HepG2 (cell line): ENCODE measurements at regions of chr17 and their contacts with region 1.

Region 1: GRCh38 chr17:35063514-35064223 is at the start of gene RFFL:
- DNase-seq: peak; percentile 98
- ATAC-seq: peak; percentile 99
- H3K4me3 ChIP-seq: peak within 1 kb of the TSS; percentile 15 to 50 (median 35)
- H3K27ac ChIP-seq: peak within 1 kb of the TSS; percentile 95
- H3K4me1 ChIP-seq: peaks cover 96% of the 10 kb centered on the region
- H3K27me3 ChIP-seq: no peaks in the 10 kb centered on the region
- CTCF ChIP-seq: peak; percentile 80
- EP300 ChIP-seq: peak; percentile 86 to 88; a peak in 3 of 4 replicates
- POLR2A ChIP-seq: peak; percentile 60 to 87
- RAD21 ChIP-seq: peak; percentile 59; the same call in 1 of the 2 replicates
- total RNA-seq, gene RFFL: 24.3 and 36.7 TPM in 2 replicates

Region 2: GRCh38 chr17:34892461-34893249 is 171.0 kb before region 1 on chr17:
- CTCF ChIA-PET with region 1: no interaction called
- POLR2A ChIA-PET with region 1: no interaction called
- in situ Hi-C with region 1: no loop called
- intact Hi-C with region 1: no loop called
- DNase-seq: no peak
- ATAC-seq: peak; percentile 76
- H3K4me3 ChIP-seq: no peak overlapping the region
- H3K27ac ChIP-seq: no peak overlapping the region
- H3K4me1 ChIP-seq: no peaks in the 10 kb centered on the region
- H3K27me3 ChIP-seq: peaks cover 0 to 6% of the 10 kb centered on the region in 2 experiments; a peak in 2 of 5 replicates
- CTCF ChIP-seq: peak; percentile 68
- EP300 ChIP-seq: no peak
- POLR2A ChIP-seq: no peak
- RAD21 ChIP-seq: peak; percentile 46; the same call in 1 of the 2 replicates

Region 3: GRCh38 chr17:35051183-35051578 is 12.5 kb before region 1 on chr17:
- CTCF ChIA-PET with region 1: no interaction called
- POLR2A ChIA-PET with region 1: interaction called, 57 read pairs
- in situ Hi-C with region 1: no loop called
- intact Hi-C with region 1: loop called (anchors 1 kb)
- DNase-seq: peak; percentile 81
- ATAC-seq: peak; percentile 79
- H3K4me3 ChIP-seq: peak overlapping the region; percentile 19 to 54 (median 50); a peak in 5 of 6 replicates
- H3K27ac ChIP-seq: peak overlapping the region; percentile 93
- H3K4me1 ChIP-seq: peaks cover 93% of the 10 kb centered on the region
- H3K27me3 ChIP-seq: no peaks in the 10 kb centered on the region; a peak in 1 of 5 replicates
- CTCF ChIP-seq: no peak
- EP300 ChIP-seq: peak in 1 of 2 experiments; percentile 60; a peak in 2 of 4 replicates
- POLR2A ChIP-seq: no peak
- RAD21 ChIP-seq: no peak

Region 4: GRCh38 chr17:35073991-35074627 is 10.4 kb after region 1 on chr17:
- CTCF ChIA-PET with region 1: no interaction called
- POLR2A ChIA-PET with region 1: interaction called, 54 read pairs
- in situ Hi-C with region 1: no loop called
- intact Hi-C with region 1: no loop called
- DNase-seq: peak; percentile 69
- ATAC-seq: peak; percentile 64
- H3K4me3 ChIP-seq: peak overlapping the region in 2 of 3 experiments; percentile 43 to 56; a peak in 2 of 6 replicates
- H3K27ac ChIP-seq: peak overlapping the region; percentile 81
- H3K4me1 ChIP-seq: peaks cover 90% of the 10 kb centered on the region
- H3K27me3 ChIP-seq: no peaks in the 10 kb centered on the region; a peak in 1 of 5 replicates
- CTCF ChIP-seq: no peak
- EP300 ChIP-seq: peak in 1 of 2 experiments; percentile 27; a peak in 1 of 4 replicates
- POLR2A ChIP-seq: no peak
- RAD21 ChIP-seq: no peak

Region 5: GRCh38 chr17:35080536-35080935 is 16.9 kb after region 1 on chr17:
- CTCF ChIA-PET with region 1: no interaction called
- POLR2A ChIA-PET with region 1: interaction called, 54 read pairs
- in situ Hi-C with region 1: no loop called
- intact Hi-C with region 1: no loop called
- DNase-seq: no peak
- ATAC-seq: no peak
- H3K4me3 ChIP-seq: no peak overlapping the region
- H3K27ac ChIP-seq: peak overlapping the region; percentile 27
- H3K4me1 ChIP-seq: peaks cover 91% of the 10 kb centered on the region
- H3K27me3 ChIP-seq: no peaks in the 10 kb centered on the region
- CTCF ChIP-seq: no peak
- EP300 ChIP-seq: no peak
- POLR2A ChIP-seq: no peak
- RAD21 ChIP-seq: no peak